K562 (cell line): ENCODE measurements at regions of chr16 and their contacts with region 1.

Region 1: GRCh38 chr16:813204-813915 is 12.8 kb upstream of the GNG13 start:
- DNase-seq: peak; percentile 64 to 88 (median 84)
- ATAC-seq: peak; percentile 95
- H3K4me3 ChIP-seq: no peak overlapping the region
- H3K27ac ChIP-seq: no peak overlapping the region
- H3K4me1 ChIP-seq: peaks cover 3 to 47% of the 10 kb centered on the region in 2 experiments; a peak in 4 of 5 replicates
- H3K27me3 ChIP-seq: peaks cover 29 to 71% of the 10 kb centered on the region in 2 experiments
- CTCF ChIP-seq: peak; percentile 70 to 84 (median 78)
- EP300 ChIP-seq: no peak
- POLR2A ChIP-seq: no peak
- RAD21 ChIP-seq: peak; percentile 83 to 88

Region 2: GRCh38 chr16:799948-800833 is 13.2 kb before region 1 on chr16 and contains the start of gene GNG13:
- CTCF ChIA-PET with region 1: no interaction called
- POLR2A ChIA-PET with region 1: no interaction called
- in situ Hi-C with region 1: no loop called
- intact Hi-C with region 1: no loop called
- DNase-seq: peak; percentile 46 to 78 (median 64)
- ATAC-seq: peak; percentile 49
- H3K4me3 ChIP-seq: no peak within 1 kb of the TSS
- H3K27ac ChIP-seq: no peak within 1 kb of the TSS
- H3K4me1 ChIP-seq: peaks cover 2 to 88% of the 10 kb centered on the region in 2 experiments; a peak in 3 of 5 replicates
- H3K27me3 ChIP-seq: no peaks in the 10 kb centered on the region
- CTCF ChIP-seq: no peak
- EP300 ChIP-seq: no peak
- POLR2A ChIP-seq: no peak; the same call in 1 of the 2 replicates
- RAD21 ChIP-seq: no peak
- polyA plus RNA-seq, gene GNG13: not detected

Region 3: DNA sequence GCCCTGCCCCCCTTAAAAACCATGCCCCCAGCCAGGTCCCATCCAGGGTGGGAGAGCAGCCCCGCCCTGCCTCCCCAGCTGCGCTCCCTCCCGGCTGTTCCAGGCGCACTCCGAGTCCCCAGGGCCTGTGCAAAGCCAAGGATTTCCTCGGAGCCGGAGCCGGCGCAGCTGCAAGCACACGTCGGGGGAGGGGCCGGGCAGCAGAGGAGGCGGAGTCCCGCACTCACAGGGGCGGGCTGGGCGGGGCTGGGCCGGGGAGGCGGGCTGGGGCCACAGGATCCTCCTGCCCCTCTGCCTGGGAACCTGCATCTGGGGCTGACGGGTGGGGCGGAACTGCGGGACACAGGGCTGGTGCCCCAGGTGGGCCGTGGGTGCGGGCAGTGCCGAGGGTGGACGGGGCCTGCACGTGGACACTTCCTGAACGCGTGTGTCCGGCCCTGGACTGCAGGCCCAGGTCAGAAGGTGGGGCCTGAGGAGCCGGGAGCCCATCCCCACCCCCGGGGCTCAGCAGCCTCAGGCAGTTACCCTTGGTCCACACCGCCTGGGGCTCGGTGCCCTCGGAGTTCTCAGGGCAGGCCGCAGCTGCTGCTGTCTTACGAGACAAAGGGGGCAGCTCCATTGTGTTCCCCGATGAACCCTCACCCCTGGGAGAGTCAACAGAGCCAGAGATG is 235.2 kb after region 1 on chr16:
- CTCF ChIA-PET with region 1: no interaction called
- POLR2A ChIA-PET with region 1: no interaction called
- in situ Hi-C with region 1: loop called (anchors 5 kb)
- intact Hi-C with region 1: no loop called
- DNase-seq: peak; percentile 69 to 89 (median 80)
- ATAC-seq: peak; percentile 91
- H3K4me3 ChIP-seq: no peak overlapping the region
- H3K27ac ChIP-seq: no peak overlapping the region
- H3K4me1 ChIP-seq: peaks cover 0 to 74% of the 10 kb centered on the region in 2 experiments; a peak in 2 of 5 replicates
- H3K27me3 ChIP-seq: peaks cover 12 to 54% of the 10 kb centered on the region in 2 experiments; a peak in 3 of 5 replicates
- CTCF ChIP-seq: no peak
- EP300 ChIP-seq: no peak
- POLR2A ChIP-seq: no peak
- RAD21 ChIP-seq: no peak

Region 4: DNA sequence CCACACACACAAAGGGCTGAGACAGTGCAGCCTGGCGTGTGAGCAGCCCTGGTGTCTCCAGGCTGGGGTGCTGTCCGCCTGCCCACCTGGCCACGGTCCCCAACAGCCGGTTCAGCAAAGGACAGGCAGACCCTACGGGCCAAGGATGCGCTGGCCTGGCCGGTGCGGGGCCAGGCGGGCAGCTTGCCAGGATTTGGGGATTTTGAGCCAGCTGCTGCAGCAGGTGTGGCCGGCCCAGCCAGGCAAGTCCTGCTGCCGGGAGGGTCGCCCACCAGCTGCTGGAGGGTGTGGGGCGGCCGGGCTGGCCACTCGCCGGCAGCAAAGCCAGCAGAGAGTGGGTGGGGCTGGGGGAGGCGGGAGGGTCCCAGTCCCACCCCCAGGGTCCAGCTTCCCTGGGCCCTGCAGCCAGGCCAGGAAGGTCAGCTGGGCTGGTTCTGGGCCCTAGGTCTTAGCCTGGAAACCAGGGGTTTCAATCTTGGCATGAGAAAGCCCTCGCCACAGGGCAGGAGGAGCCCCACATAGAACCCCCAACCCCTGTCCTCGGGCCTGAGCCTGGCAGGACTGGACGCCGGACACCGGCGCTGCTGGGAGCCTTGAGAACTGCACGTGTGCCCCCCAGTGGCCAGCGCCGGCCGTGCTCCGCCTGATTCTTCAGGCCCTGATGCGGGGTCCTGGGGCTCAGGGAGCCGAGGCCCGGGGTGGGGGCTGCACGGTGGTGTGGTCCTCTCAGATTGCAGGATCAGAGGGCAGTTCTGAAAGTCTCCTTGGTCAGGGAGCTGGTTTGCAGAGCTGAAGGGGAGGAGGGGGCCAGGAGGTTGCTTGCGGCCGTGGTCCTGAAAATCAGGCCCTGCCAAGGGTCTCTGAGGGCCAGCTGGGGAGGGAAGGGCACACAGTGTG is 241.5 kb after region 1 on chr16:
- CTCF ChIA-PET with region 1: interaction called, 6 read pairs
- POLR2A ChIA-PET with region 1: no interaction called
- in situ Hi-C with region 1: no loop called
- intact Hi-C with region 1: loop called (anchors 2 kb)
- DNase-seq: peak; percentile 64 to 75 (median 67)
- ATAC-seq: peak; percentile 93
- H3K4me3 ChIP-seq: no peak overlapping the region
- H3K27ac ChIP-seq: no peak overlapping the region
- H3K4me1 ChIP-seq: peaks cover 0 to 35% of the 10 kb centered on the region in 2 experiments; a peak in 2 of 5 replicates
- H3K27me3 ChIP-seq: peaks cover 11 to 24% of the 10 kb centered on the region in 2 experiments; a peak in 3 of 5 replicates
- CTCF ChIP-seq: peak; percentile 74 to 81 (median 77)
- EP300 ChIP-seq: no peak
- POLR2A ChIP-seq: no peak
- RAD21 ChIP-seq: peak; percentile 52 to 79